ENCODE measurements at regions of chr3 and their contacts with region 1.

Region 1: GRCh38 chr3:14093831-14094230 is 30.8 kb downstream of the CHCHD4 start:
- DNase-seq: no peak
- H3K4me3 ChIP-seq: no peak overlapping the region
- H3K27ac ChIP-seq: no peak overlapping the region
- H3K4me1 ChIP-seq: no peaks in the 10 kb centered on the region
- H3K27me3 ChIP-seq: no peaks in the 10 kb centered on the region
- CTCF ChIP-seq: no peak
- POLR2A ChIP-seq: no peak

Region 2: DNA sequence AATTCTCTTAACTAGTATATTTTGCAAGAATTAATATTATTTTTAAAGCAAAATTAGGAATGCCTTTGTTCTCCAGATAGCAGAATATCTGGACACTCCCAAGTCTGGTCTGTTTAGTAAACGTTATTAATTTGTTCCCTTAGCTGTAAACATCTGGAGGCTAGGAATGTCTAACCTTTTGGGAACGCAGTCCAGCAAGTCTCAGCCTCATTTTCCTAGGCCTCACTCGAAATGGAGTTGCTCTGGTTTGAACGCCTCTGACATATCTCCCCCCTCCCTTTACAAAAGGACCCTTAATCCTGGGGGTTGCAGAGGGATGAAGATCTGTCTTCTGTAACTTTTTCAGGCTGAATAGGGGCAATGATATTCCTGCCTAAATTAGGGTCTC is 154.6 kb before region 1 on chr3:
- intact Hi-C with region 1: no loop called
- DNase-seq: no peak
- H3K4me3 ChIP-seq: no peak overlapping the region
- H3K27ac ChIP-seq: no peak overlapping the region
- H3K4me1 ChIP-seq: no peaks in the 10 kb centered on the region
- H3K27me3 ChIP-seq: no peaks in the 10 kb centered on the region
- CTCF ChIP-seq: no peak
- POLR2A ChIP-seq: no peak

Region 3: GRCh38 chr3:14806641-14807263 is 712.9 kb after region 1 on chr3:
- intact Hi-C with region 1: loop called (anchors 5 kb)
- DNase-seq: no peak
- H3K4me3 ChIP-seq: no peak overlapping the region
- H3K27ac ChIP-seq: no peak overlapping the region
- H3K4me1 ChIP-seq: peaks cover 7% of the 10 kb centered on the region
- H3K27me3 ChIP-seq: no peaks in the 10 kb centered on the region
- CTCF ChIP-seq: no peak
- POLR2A ChIP-seq: no peak

Region 4: GRCh38 chr3:14991818-14992612 is 898.2 kb after region 1 on chr3:
- intact Hi-C with region 1: no loop called
- DNase-seq: no peak
- H3K4me3 ChIP-seq: no peak overlapping the region
- H3K27ac ChIP-seq: no peak overlapping the region
- H3K4me1 ChIP-seq: peaks cover 28% of the 10 kb centered on the region
- H3K27me3 ChIP-seq: no peaks in the 10 kb centered on the region
- CTCF ChIP-seq: no peak
- POLR2A ChIP-seq: no peak

Measured in vagina (tissue), 2 donors.